Heart right ventricle (tissue), 16 donors: ENCODE measurements at regions of chr11 and their contacts with region 1.

Region 1: GRCh38 chr11:122179961-122180834 is 64.2 kb upstream of the BLID start:
- DNase-seq: no peak
- ATAC-seq: peak in 5 of 8 donors; percentile 43 to 85 (median 58)
- H3K4me3 ChIP-seq: peak overlapping the region in 1 of 10 donors; percentile 7
- H3K27ac ChIP-seq: peak overlapping the region in 4 of 10 donors; percentile 6 to 75 (median 51)
- H3K4me1 ChIP-seq: peaks cover 0 to 30% (median 4%) of the 10 kb centered on the region in 9 donors
- H3K27me3 ChIP-seq: no peaks in the 10 kb centered on the region
- CTCF ChIP-seq: no peak

Region 2: GRCh38 chr11:122115524-122116379 is 64.4 kb before region 1 on chr11 and contains the start of gene BLID:
- intact Hi-C with region 1: loop called in 2 of 10 experiments (anchors 10 kb)
- DNase-seq: peak in 1 of 2 donors; percentile 21
- ATAC-seq: peak in 2 of 8 donors; percentile 33 to 49
- H3K4me3 ChIP-seq: no peak within 1 kb of the TSS
- H3K27ac ChIP-seq: no peak within 1 kb of the TSS
- H3K4me1 ChIP-seq: peaks cover 0 to 5% (median 0%) of the 10 kb centered on the region in 9 donors
- H3K27me3 ChIP-seq: no peaks in the 10 kb centered on the region
- CTCF ChIP-seq: peak in 7 of 9 donors; percentile 34 to 58 (median 45)
- total RNA-seq, gene BLID: 0.70 TPM in 1 of 10 donors, not detected in the others

Region 3: GRCh38 chr11:123235117-123235655 is 1055.0 kb after region 1 on chr11:
- intact Hi-C with region 1: no loop called
- DNase-seq: peak; percentile 21 to 53
- ATAC-seq: peak in 5 of 8 donors; percentile 34 to 66 (median 56)
- H3K4me3 ChIP-seq: no peak overlapping the region
- H3K27ac ChIP-seq: no peak overlapping the region
- H3K4me1 ChIP-seq: peaks cover 0 to 31% (median 0%) of the 10 kb centered on the region in 9 donors
- H3K27me3 ChIP-seq: peaks cover 0 to 9% (median 0%) of the 10 kb centered on the region in 7 donors
- CTCF ChIP-seq: peak; percentile 6 to 66 (median 51)